Caco-2 (cell line): ENCODE measurements at regions of chr4 and their contacts with region 1.

Region 1: DNA sequence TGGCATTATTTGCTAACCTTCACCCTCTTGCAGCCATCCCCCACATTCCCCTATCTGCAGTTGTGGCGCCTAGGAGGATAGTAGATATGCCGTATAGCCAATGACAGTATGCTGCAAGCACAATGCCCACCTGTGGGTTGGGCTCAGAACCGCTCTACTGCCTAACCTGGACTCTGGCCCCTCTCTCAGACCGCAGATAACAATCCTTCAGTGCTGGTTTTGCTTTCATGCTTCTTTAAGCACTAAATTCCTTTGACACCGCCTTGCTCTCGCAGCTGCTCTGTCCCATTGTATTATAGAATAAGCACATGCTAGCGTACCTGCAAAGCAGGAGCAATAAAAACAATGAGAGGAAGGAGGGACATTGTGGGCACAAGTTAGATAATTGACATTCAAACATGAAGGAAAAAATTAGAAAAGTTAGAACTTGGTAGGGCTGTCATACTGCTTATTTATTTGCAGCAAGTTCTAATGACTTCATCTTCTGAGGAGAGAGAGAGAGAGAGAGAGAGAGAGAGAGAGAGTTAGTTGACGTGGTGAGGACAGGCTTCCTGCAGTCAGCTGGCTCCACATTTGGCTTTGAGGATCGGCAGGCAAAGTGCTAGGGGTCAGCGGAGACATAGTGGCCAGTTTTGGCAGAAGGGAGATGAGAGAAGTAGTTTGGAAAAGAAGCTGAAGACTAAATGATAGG is 55.8 kb downstream of the WWC2 start:
- DNase-seq: peak; percentile 82 to 89
- H3K4me3 ChIP-seq: peak overlapping the region; percentile 29
- H3K4me3 Mint-ChIP-seq: peak overlapping the region; percentile 65
- H3K27ac Mint-ChIP-seq: peak overlapping the region; percentile 66
- H3K4me1 ChIP-seq: peaks cover 52% of the 10 kb centered on the region
- H3K4me1 Mint-ChIP-seq: peaks cover 28% of the 10 kb centered on the region
- H3K27me3 ChIP-seq: no peaks in the 10 kb centered on the region
- H3K27me3 Mint-ChIP-seq: no peaks in the 10 kb centered on the region
- CTCF ChIP-seq: no peak

Region 2: DNA sequence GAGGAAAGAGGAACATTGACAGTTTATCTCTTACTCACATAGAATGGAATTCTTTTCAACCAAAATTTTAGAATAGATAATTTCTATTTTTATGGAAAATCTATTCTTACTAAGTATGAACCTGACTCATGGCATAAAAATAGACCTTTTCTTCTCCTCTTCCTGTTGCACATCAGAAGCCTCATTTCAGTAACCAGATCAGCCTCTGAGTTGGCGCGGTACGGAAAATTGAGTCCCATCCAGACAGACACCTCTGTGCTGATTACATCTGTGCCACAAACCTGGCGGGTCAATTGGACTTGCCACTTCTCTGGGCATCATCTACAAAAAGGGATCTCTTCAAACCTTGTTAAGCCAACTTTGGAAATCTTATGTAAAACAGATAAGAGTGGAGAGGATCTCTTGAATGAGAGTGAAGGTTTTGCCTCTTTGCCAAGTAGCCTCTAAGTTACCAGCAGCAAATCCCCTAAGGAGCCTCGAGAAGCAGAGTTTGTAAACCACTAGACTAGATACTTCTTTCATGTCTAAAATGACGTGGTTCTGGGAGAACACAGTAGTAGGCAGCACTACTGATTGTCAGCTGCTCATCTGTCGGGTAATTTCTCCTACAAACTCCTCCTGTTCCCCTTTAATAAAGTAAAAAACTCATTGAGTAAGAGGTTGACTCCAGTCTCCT is 874.3 kb before region 1 on chr4:
- CTCF ChIA-PET with region 1: no interaction called
- POLR2A ChIA-PET with region 1: no interaction called
- intact Hi-C with region 1: no loop called
- DNase-seq: no peak
- H3K4me3 ChIP-seq: no peak overlapping the region
- H3K4me3 Mint-ChIP-seq: no peak overlapping the region
- H3K27ac Mint-ChIP-seq: no peak overlapping the region
- H3K4me1 ChIP-seq: peaks cover 24% of the 10 kb centered on the region
- H3K4me1 Mint-ChIP-seq: peaks cover 13% of the 10 kb centered on the region
- H3K27me3 ChIP-seq: no peaks in the 10 kb centered on the region
- H3K27me3 Mint-ChIP-seq: no peaks in the 10 kb centered on the region
- CTCF ChIP-seq: no peak

Region 3: GRCh38 chr4:183111452-183111885 is 43.4 kb before region 1 on chr4:
- CTCF ChIA-PET with region 1: no interaction called
- POLR2A ChIA-PET with region 1: no interaction called
- intact Hi-C with region 1: loop called (anchors 2 kb)
- DNase-seq: peak; percentile 53 to 65
- H3K4me3 ChIP-seq: no peak overlapping the region
- H3K4me3 Mint-ChIP-seq: peak overlapping the region; percentile 68
- H3K27ac Mint-ChIP-seq: peak overlapping the region; percentile 81
- H3K4me1 ChIP-seq: peaks cover 84% of the 10 kb centered on the region
- H3K4me1 Mint-ChIP-seq: peaks cover 56% of the 10 kb centered on the region
- H3K27me3 ChIP-seq: no peaks in the 10 kb centered on the region
- H3K27me3 Mint-ChIP-seq: no peaks in the 10 kb centered on the region
- CTCF ChIP-seq: no peak

Region 4: GRCh38 chr4:183165376-183165775 is 10.5 kb after region 1 on chr4:
- CTCF ChIA-PET with region 1: interaction called, 3 read pairs
- POLR2A ChIA-PET with region 1: interaction called, 3 read pairs
- intact Hi-C with region 1: loop called (anchors 1 kb)
- DNase-seq: no peak
- H3K4me3 ChIP-seq: no peak overlapping the region
- H3K4me3 Mint-ChIP-seq: no peak overlapping the region
- H3K27ac Mint-ChIP-seq: peak overlapping the region; percentile 70
- H3K4me1 ChIP-seq: peaks cover 43% of the 10 kb centered on the region
- H3K4me1 Mint-ChIP-seq: peaks cover 64% of the 10 kb centered on the region
- H3K27me3 ChIP-seq: no peaks in the 10 kb centered on the region
- H3K27me3 Mint-ChIP-seq: no peaks in the 10 kb centered on the region
- CTCF ChIP-seq: no peak

Region 5: GRCh38 chr4:183249857-183250256 is 95.0 kb after region 1 on chr4:
- CTCF ChIA-PET with region 1: no interaction called
- POLR2A ChIA-PET with region 1: no interaction called
- intact Hi-C with region 1: loop called (anchors 5 kb)
- DNase-seq: peak in 1 of 2 experiments; percentile 35
- H3K4me3 ChIP-seq: no peak overlapping the region
- H3K4me3 Mint-ChIP-seq: no peak overlapping the region
- H3K27ac Mint-ChIP-seq: no peak overlapping the region
- H3K4me1 ChIP-seq: peaks cover 25% of the 10 kb centered on the region
- H3K4me1 Mint-ChIP-seq: peaks cover 9% of the 10 kb centered on the region
- H3K27me3 ChIP-seq: no peaks in the 10 kb centered on the region
- H3K27me3 Mint-ChIP-seq: no peaks in the 10 kb centered on the region
- CTCF ChIP-seq: peak in 1 of 2 experiments; percentile 24

Region 6: GRCh38 chr4:183398227-183399125 is 243.6 kb after region 1 on chr4:
- CTCF ChIA-PET with region 1: no interaction called
- POLR2A ChIA-PET with region 1: no interaction called
- intact Hi-C with region 1: no loop called
- DNase-seq: peak; percentile 61 to 70
- H3K4me3 ChIP-seq: peak overlapping the region; percentile 26
- H3K4me3 Mint-ChIP-seq: peak overlapping the region; percentile 69
- H3K27ac Mint-ChIP-seq: peak overlapping the region; percentile 43
- H3K4me1 ChIP-seq: no peaks in the 10 kb centered on the region
- H3K4me1 Mint-ChIP-seq: no peaks in the 10 kb centered on the region
- H3K27me3 ChIP-seq: no peaks in the 10 kb centered on the region
- H3K27me3 Mint-ChIP-seq: no peaks in the 10 kb centered on the region
- CTCF ChIP-seq: peak in 1 of 2 experiments; percentile 38